ENCODE measurements at regions of chr3 and their contacts with region 1.

Region 1: DNA sequence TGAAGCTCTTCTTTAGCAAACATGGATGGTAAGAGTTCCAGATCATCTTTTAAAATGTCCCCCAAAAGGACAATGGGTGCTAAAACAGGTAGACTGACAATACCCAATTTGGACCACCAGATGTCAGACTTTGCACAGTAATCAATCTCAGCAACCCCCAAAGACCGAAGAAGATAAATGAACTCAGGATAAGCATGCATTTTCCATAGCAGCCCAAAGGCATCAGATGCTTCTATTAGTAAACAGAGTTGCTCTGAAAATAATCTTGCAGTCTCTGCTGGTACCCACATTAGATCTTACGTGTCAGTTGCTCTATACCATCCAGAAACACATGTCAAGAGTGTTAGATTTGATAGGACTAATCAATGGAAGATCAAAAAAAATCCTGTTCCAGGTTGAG is 20.6 kb downstream of the MYH15 start:
- DNase-seq: peak in 1 of 2 experiments; percentile 51
- H3K4me3 ChIP-seq: no peak overlapping the region
- H3K4me3 Mint-ChIP-seq: no peak overlapping the region
- H3K27ac Mint-ChIP-seq: no peak overlapping the region
- H3K4me1 ChIP-seq: no peaks in the 10 kb centered on the region
- H3K4me1 Mint-ChIP-seq: no peaks in the 10 kb centered on the region
- H3K27me3 ChIP-seq: no peaks in the 10 kb centered on the region; the same call in 1 of the 2 replicates
- H3K27me3 Mint-ChIP-seq: peaks cover 12% of the 10 kb centered on the region
- CTCF ChIP-seq: peak; percentile 53 to 74

Region 2: DNA sequence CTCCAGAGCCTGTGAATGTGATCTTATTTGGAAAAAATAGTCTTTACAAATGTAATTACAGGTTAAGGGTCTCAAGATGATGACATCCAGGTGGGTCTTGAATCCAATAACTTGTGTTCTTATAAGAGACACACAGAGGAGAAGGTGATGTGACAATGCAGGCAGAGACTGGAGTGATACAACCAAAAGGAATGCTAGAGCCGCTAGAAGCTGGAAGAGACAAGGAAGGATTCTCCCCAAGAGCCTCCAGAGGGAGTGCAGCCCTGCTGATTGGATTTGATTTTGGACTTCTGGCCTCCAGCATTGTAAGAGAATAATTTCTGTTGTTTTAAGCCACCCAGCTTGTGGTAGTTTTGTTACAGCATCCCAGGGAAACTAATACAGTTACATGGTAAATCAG is 11.0 kb after region 1 on chr3:
- CTCF ChIA-PET with region 1: no interaction called
- POLR2A ChIA-PET with region 1: no interaction called
- intact Hi-C with region 1: no loop called
- DNase-seq: no peak
- H3K4me3 ChIP-seq: no peak overlapping the region
- H3K4me3 Mint-ChIP-seq: no peak overlapping the region
- H3K27ac Mint-ChIP-seq: no peak overlapping the region
- H3K4me1 ChIP-seq: no peaks in the 10 kb centered on the region
- H3K4me1 Mint-ChIP-seq: no peaks in the 10 kb centered on the region
- H3K27me3 ChIP-seq: no peaks in the 10 kb centered on the region
- H3K27me3 Mint-ChIP-seq: peaks cover 7% of the 10 kb centered on the region
- CTCF ChIP-seq: no peak

Region 3: GRCh38 chr3:108552267-108553159 is 62.7 kb after region 1 on chr3:
- CTCF ChIA-PET with region 1: interaction called, 4 read pairs
- POLR2A ChIA-PET with region 1: no interaction called
- intact Hi-C with region 1: loop called (anchors 1 kb)
- DNase-seq: peak in 1 of 2 experiments; percentile 40
- H3K4me3 ChIP-seq: no peak overlapping the region
- H3K4me3 Mint-ChIP-seq: no peak overlapping the region
- H3K27ac Mint-ChIP-seq: no peak overlapping the region
- H3K4me1 ChIP-seq: peaks cover 36% of the 10 kb centered on the region
- H3K4me1 Mint-ChIP-seq: peaks cover 22% of the 10 kb centered on the region
- H3K27me3 ChIP-seq: no peaks in the 10 kb centered on the region
- H3K27me3 Mint-ChIP-seq: no peaks in the 10 kb centered on the region
- CTCF ChIP-seq: peak; percentile 27 to 36

Region 4: DNA sequence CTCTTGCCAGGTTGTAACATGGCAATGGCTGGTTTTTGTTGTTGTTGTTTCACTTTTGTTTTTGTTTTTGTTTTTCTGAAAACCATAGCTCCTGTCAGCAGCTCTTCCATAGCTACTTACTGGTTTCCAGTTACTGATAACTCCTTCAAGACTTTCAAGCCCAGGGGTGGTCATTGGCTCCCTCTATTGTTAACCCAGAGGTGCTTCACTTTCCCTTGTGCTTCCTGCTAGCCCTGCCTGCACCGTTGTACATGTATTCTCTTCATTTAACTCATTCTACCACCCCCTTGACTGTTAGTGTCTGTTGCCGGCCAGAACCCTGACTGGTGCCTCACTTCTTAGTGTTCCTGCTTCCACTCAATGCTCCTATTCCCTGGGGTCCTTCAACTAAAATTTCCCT is 328.6 kb after region 1 on chr3:
- CTCF ChIA-PET with region 1: no interaction called
- POLR2A ChIA-PET with region 1: no interaction called
- intact Hi-C with region 1: loop called (anchors 1 kb)
- DNase-seq: peak; percentile 56 to 61
- H3K4me3 ChIP-seq: no peak overlapping the region
- H3K4me3 Mint-ChIP-seq: no peak overlapping the region
- H3K27ac Mint-ChIP-seq: no peak overlapping the region
- H3K4me1 ChIP-seq: no peaks in the 10 kb centered on the region
- H3K4me1 Mint-ChIP-seq: no peaks in the 10 kb centered on the region
- H3K27me3 ChIP-seq: no peaks in the 10 kb centered on the region
- H3K27me3 Mint-ChIP-seq: no peaks in the 10 kb centered on the region
- CTCF ChIP-seq: peak; percentile 17 to 68

Region 5: GRCh38 chr3:108914774-108915641 is 425.2 kb after region 1 on chr3:
- CTCF ChIA-PET with region 1: no interaction called
- POLR2A ChIA-PET with region 1: no interaction called
- intact Hi-C with region 1: loop called (anchors 1 kb)
- DNase-seq: peak; percentile 59 to 67
- H3K4me3 ChIP-seq: no peak overlapping the region
- H3K4me3 Mint-ChIP-seq: no peak overlapping the region
- H3K27ac Mint-ChIP-seq: no peak overlapping the region
- H3K4me1 ChIP-seq: no peaks in the 10 kb centered on the region
- H3K4me1 Mint-ChIP-seq: peaks cover 6% of the 10 kb centered on the region
- H3K27me3 ChIP-seq: no peaks in the 10 kb centered on the region
- H3K27me3 Mint-ChIP-seq: no peaks in the 10 kb centered on the region
- CTCF ChIP-seq: peak; percentile 84 to 85

Region 6: DNA sequence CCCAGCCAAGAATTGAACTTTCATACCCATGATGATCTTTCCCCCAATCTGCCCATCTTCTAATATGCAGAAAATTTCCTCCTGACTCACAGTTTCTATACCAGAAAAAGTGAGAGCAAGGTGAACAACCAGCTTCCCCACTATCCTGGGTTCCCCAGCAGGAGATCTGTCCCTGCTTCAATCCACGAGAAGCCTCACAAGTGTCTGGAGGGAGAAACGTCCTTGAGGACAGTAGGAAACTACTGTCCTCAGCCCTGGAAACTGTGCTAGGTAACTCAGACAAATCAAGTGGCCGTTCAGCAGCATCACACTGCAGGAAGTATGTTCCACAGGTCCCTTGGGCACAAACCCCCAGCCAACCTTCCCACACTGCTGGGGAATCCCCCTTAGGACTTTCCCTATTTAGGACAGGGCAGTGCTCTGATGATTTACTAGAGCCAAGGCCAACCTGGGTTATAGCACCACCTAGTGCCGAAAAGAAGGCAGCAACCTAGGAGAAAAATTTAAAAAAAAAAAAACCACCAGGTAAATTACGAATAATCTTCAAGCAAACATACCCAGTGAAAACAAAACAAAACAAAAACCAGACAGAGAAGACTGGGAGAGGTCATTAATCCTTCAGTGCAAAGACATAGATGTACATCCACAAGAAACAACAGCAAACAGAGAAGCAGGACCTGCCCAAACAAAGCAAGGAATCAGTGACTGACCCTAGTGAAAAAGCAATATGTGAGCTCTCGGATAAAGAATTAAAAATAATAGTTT is 592.2 kb after region 1 on chr3:
- CTCF ChIA-PET with region 1: no interaction called
- POLR2A ChIA-PET with region 1: no interaction called
- intact Hi-C with region 1: loop called (anchors 1 kb)
- DNase-seq: peak; percentile 36 to 47
- H3K4me3 ChIP-seq: no peak overlapping the region
- H3K4me3 Mint-ChIP-seq: no peak overlapping the region
- H3K27ac Mint-ChIP-seq: no peak overlapping the region
- H3K4me1 ChIP-seq: no peaks in the 10 kb centered on the region
- H3K4me1 Mint-ChIP-seq: no peaks in the 10 kb centered on the region
- H3K27me3 ChIP-seq: no peaks in the 10 kb centered on the region
- H3K27me3 Mint-ChIP-seq: peaks cover 19% of the 10 kb centered on the region
- CTCF ChIP-seq: peak; percentile 67 to 69